Heart right ventricle (tissue), 16 donors: ENCODE measurements at regions of chr9 and their contacts with region 1.

Region 1: GRCh38 chr9:83281306-83282255 is 218.6 kb upstream of the RASEF start:
- DNase-seq: peak in 1 of 2 donors; percentile 56
- ATAC-seq: peak; percentile 68 to 91 (median 78)
- H3K4me3 ChIP-seq: no peak overlapping the region
- H3K27ac ChIP-seq: peak overlapping the region in 8 of 10 donors; percentile 34 to 75 (median 65)
- H3K4me1 ChIP-seq: peaks cover 6 to 27% (median 22%) of the 10 kb centered on the region in 9 donors
- H3K27me3 ChIP-seq: no peaks in the 10 kb centered on the region
- CTCF ChIP-seq: no peak

Region 2: GRCh38 chr9:84238652-84239051 is 957.1 kb after region 1 on chr9:
- intact Hi-C with region 1: loop called in 1 of 10 experiments (anchors 5 kb)
- DNase-seq: no peak
- ATAC-seq: no peak
- H3K4me3 ChIP-seq: no peak overlapping the region
- H3K27ac ChIP-seq: peak overlapping the region in 1 of 10 donors; percentile 54
- H3K4me1 ChIP-seq: peaks cover 0 to 8% (median 0%) of the 10 kb centered on the region in 9 donors
- H3K27me3 ChIP-seq: no peaks in the 10 kb centered on the region
- CTCF ChIP-seq: peak in 1 of 9 donors; percentile 7